Ascending aorta (tissue), 2 donors: ENCODE measurements at regions of chr22 and their contacts with region 1.

Region 1: DNA sequence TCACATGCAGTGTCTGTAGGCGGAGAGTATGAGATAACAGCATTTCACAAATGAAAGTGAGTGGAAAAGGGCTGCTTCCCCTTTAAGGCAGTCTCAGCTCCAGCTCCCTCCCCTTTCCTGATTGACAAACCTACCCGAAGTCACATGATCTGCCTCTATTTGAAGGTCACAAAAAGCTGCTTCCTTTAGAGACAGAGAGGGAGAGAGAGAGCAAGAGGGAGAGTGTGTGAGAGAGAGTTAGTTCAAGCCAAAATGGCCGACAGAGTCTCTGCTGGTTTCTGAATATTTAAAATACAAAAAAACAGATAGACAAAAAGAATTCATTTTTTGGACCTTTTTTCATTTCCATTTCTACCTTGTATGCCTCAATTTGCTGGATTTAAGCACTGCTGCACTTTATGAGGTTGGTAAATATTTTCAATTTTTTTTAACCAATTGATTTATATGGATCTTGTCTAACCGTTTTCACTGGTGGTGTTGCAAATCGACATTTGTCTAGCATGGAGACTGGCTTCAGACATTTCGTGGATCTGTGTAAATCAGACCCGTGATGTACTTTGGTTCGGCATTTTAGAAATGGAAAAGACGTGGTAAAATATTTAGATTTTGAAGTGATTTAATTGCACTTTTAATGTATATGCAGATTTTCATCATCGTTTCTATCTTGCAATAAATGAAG is at the start of gene TNRC6B:
- DNase-seq: peak; percentile 42 to 89
- H3K4me3 ChIP-seq: peak within 1 kb of the TSS; percentile 65 to 67
- H3K27ac ChIP-seq: peak within 1 kb of the TSS; percentile 75 to 82
- H3K4me1 ChIP-seq: peaks cover 7 to 36% of the 10 kb centered on the region in 2 donors
- H3K27me3 ChIP-seq: no peaks in the 10 kb centered on the region
- CTCF ChIP-seq: no peak
- total RNA-seq, gene TNRC6B: 22.4 TPM

Region 2: GRCh38 chr22:40044102-40044869 is 133.6 kb before region 1 on chr22:
- intact Hi-C with region 1: loop called (anchors 1 kb)
- DNase-seq: peak; percentile 97 to 99
- H3K4me3 ChIP-seq: peak overlapping the region; percentile 91 to 96
- H3K27ac ChIP-seq: peak overlapping the region; percentile 85 to 93
- H3K4me1 ChIP-seq: peaks cover 0 to 8% of the 10 kb centered on the region in 2 donors
- H3K27me3 ChIP-seq: no peaks in the 10 kb centered on the region
- CTCF ChIP-seq: no peak

Region 3: DNA sequence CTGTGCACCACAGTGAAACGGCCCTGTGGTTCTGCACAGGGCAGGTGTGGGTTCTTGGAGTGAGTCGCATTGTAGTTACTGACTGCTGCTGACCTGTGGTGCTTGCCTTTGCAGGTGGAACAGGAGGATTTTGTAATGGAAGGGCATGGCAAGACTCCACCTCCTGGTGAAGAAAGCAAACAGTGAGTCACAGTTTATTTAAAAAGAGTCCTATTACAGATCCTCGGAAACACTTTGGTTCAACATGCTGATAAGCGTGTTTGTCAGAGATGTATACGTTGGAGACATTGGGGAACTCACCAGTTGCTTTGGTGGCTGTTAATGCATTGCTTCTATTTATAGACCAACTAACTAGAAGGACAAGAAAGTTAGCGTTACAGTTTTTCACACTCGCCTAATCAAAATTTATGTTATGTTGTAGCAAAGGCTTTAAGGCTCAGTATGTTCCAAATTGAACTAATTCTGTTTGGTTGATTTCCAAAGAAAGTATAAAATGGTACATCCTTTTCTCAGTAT is 21.8 kb before region 1 on chr22:
- intact Hi-C with region 1: loop called (anchors 2 kb)
- DNase-seq: no peak
- H3K4me3 ChIP-seq: no peak overlapping the region
- H3K27ac ChIP-seq: peak overlapping the region; percentile 79 to 94
- H3K4me1 ChIP-seq: peaks cover 4 to 20% of the 10 kb centered on the region in 2 donors
- H3K27me3 ChIP-seq: no peaks in the 10 kb centered on the region
- CTCF ChIP-seq: peak in 1 of 3 experiments; percentile 11

Region 4: DNA sequence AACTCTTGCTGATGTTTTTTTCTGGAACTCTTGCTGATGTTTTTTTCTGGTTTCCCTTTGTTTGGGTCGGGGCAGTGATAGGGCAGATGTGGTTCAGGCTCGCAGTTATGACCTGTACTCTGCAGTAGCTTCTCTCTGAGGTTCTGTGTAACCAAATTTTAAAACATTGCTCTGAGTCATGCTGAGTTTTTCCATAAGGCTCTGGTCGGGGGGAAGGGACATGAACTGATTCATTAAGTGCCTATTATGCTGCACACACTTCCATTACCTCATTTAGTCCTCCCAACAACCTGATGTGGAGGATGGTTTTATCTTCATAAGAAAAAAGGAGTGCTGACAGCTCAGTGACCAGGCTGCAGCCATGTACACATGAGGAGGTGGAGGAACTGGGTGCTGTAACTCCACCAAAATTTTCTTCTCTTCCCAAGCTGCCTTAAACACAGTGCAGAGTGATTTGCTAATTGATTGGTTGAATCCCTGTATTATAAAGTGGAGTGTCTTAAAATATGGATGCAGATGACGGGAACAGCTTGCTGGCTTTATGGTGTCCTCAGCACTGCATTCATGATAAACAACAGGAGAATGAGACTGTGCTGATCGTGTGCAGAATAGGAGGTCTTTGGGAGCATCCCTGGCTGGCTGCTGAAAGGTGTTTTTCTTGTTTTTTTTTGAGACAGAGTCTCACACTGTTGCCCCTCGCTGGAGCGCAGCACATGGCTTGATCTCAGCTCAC is 18.9 kb after region 1 on chr22:
- intact Hi-C with region 1: loop called (anchors 2 kb)
- DNase-seq: peak in 1 of 2 donors; percentile 76
- H3K4me3 ChIP-seq: peak overlapping the region in 1 of 2 donors; percentile 20
- H3K27ac ChIP-seq: peak overlapping the region; percentile 47 to 62
- H3K4me1 ChIP-seq: peaks cover 4 to 26% of the 10 kb centered on the region in 2 donors
- H3K27me3 ChIP-seq: no peaks in the 10 kb centered on the region
- CTCF ChIP-seq: no peak

Region 5: DNA sequence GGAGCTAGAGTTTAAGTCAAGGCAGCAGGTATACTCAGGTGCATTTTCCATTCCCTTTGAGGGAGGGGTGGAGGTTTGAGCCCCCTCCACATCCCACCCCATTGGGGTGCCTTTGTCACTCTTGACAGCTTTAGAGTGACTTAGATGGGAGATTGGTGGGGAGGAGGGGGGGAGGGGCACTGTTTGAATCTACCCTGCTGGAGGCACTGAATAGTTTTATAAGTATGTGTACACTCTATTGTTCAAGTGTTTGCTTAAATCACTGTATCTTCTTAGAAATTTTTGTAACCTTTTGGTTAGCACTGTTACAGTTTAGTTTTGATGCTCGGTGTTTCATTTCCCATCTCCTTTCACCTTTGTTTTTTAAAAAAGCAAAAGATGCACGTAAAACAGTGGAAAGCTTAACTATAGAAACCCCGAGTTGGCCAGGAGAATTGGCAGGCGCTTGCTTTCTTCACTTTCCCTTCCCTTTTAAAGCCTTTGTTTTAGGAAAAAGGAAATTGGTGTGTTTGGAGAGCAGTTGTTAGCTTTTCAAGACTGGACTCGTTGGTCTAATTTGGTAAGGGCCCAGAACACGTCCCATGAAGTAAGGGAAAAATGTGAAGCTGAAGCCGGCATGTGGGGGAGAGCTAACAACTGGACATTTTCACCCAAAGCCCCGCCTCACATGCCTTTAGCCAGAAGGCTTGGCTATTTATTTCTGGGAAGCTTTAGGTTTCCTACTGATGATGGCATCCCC is 42.6 kb after region 1 on chr22:
- intact Hi-C with region 1: loop called (anchors 5 kb)
- DNase-seq: no peak
- H3K4me3 ChIP-seq: peak overlapping the region in 1 of 2 donors; percentile 37
- H3K27ac ChIP-seq: peak overlapping the region; percentile 83 to 88
- H3K4me1 ChIP-seq: peaks cover 11 to 29% of the 10 kb centered on the region in 2 donors
- H3K27me3 ChIP-seq: no peaks in the 10 kb centered on the region
- CTCF ChIP-seq: no peak

Region 6: GRCh38 chr22:40276996-40277823 is 99.3 kb after region 1 on chr22:
- intact Hi-C with region 1: loop called (anchors 5 kb)
- DNase-seq: no peak
- H3K4me3 ChIP-seq: peak overlapping the region; percentile 51 to 58
- H3K27ac ChIP-seq: peak overlapping the region; percentile 80 to 89
- H3K4me1 ChIP-seq: peaks cover 3 to 11% of the 10 kb centered on the region in 2 donors
- H3K27me3 ChIP-seq: no peaks in the 10 kb centered on the region
- CTCF ChIP-seq: no peak

Region 7: DNA sequence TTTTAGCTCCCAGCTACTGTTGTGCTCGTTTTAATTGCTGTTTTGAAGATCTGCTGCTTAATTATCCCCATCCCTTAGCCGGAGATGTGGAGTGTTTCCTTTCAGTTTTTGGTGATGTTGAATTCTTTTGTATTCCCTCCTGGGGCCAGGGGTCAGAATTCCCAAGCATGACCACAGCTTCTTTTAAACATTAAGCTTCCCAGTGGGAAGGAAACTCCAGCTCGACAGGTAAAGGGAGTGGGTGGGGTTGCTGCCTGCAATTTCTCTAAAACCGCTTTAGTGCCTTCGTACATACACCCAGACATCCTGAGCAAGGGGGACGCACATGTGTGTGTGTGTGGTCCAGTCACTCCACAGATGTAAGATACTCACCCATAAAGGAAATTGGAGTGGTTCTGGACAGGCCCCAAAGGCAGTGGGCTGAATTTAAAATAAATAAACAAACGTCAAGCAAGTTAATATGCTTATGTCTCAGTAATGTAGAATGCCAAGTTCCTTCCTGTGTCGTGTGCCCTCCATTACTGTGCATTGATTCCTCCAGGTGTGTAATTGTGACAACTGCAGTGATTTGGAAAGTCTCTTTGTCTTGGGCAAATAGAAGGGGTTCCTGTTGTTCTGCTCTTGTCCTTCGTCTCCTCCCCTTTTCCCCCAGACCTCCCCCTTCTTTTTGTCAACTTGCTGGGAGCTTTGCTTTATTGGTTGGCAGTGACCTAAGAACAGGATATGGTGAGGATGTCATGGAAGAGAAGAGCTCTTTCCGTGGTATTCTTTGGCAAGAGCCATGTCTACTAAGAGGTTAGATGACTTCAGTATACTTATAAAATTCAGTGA is 149.2 kb after region 1 on chr22:
- intact Hi-C with region 1: no loop called
- DNase-seq: peak in 1 of 2 donors; percentile 52
- H3K4me3 ChIP-seq: no peak overlapping the region
- H3K27ac ChIP-seq: no peak overlapping the region
- H3K4me1 ChIP-seq: no peaks in the 10 kb centered on the region
- H3K27me3 ChIP-seq: no peaks in the 10 kb centered on the region
- CTCF ChIP-seq: no peak

Region 8: DNA sequence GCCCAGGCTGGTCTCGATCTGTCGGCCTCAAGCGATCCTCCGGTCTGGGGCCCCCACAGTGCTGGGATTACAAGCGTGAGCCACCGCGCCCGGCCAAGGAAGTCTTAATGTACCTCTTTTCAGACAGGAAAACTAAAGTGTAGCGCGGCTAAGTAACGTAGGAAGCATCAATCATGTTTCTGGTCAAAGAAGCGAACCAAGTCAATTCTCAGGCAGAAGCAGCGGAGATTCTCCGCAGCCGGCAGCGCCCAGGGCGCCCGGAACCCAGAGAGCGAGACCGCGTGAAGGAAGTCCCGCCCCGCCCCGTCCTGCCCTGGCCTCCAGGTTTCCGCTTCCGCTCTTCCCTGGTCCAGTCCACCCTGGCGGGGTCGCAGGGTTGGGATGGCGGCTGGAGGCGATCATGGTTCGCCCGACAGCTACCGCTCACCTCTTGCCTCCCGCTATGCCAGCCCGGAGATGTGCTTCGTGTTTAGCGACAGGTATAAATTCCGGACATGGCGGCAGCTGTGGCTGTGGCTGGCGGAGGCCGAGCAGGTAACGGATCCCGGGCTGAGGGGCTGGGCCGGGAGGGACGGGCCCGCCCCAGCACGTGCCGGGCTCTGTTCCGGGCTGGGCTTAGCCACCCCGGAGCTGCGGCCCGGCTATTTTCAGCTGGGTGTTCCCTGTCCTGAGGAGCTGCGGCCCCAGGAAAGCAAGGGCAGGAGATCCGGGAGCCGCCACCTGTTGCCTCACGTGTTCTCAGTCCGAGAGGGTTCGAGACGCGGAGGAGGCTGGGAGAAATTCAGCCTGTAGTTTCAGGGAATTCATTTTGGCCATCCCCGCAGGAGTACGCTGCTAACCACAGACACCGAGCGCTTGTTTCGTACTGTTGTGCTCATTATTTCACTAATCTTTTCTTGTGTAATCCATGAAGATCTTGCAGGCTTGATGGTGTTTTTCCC is 168.6 kb after region 1 on chr22 and contains the start of gene ADSL:
- intact Hi-C with region 1: loop called (anchors 5 kb)
- DNase-seq: peak; percentile 33 to 90
- H3K4me3 ChIP-seq: peak within 1 kb of the TSS; percentile 66 to 93
- H3K27ac ChIP-seq: peak within 1 kb of the TSS; percentile 66 to 90
- H3K4me1 ChIP-seq: peaks cover 9 to 19% of the 10 kb centered on the region in 2 donors
- H3K27me3 ChIP-seq: no peaks in the 10 kb centered on the region
- CTCF ChIP-seq: peak in 1 of 3 experiments; percentile 17
- total RNA-seq, gene ADSL: 31.3 TPM